Heart left ventricle (tissue), 16 donors: ENCODE measurements at regions of chr4 and their contacts with region 1.

Region 1: GRCh38 chr4:40056716-40057585 is at the start of gene N4BP2:
- DNase-seq: peak; percentile 86 to 93 (median 87)
- ATAC-seq: peak; percentile 60 to 86 (median 84)
- H3K4me3 ChIP-seq: peak within 1 kb of the TSS; percentile 73 to 100 (median 92)
- H3K27ac ChIP-seq: peak within 1 kb of the TSS; percentile 98 to 100 (median 100)
- H3K4me1 ChIP-seq: peaks cover 0 to 27% (median 12%) of the 10 kb centered on the region in 12 donors
- H3K27me3 ChIP-seq: no peaks in the 10 kb centered on the region
- CTCF ChIP-seq: peak; percentile 40 to 95 (median 76)
- POLR2A ChIP-seq: peak; percentile 56 to 91
- total RNA-seq, gene N4BP2: 3.5 to 6.8 (median 5.0) TPM

Region 2: GRCh38 chr4:39469429-39470077 is 587.4 kb before region 1 on chr4:
- intact Hi-C with region 1: loop called in 2 of 10 experiments (anchors 5 to 10 kb)
- DNase-seq: no peak
- ATAC-seq: peak; percentile 47 to 84 (median 76)
- H3K4me3 ChIP-seq: peak overlapping the region in 1 of 12 donors; percentile 28
- H3K27ac ChIP-seq: peak overlapping the region in 6 of 12 donors; percentile 11 to 82 (median 22)
- H3K4me1 ChIP-seq: peaks cover 0 to 10% (median 0%) of the 10 kb centered on the region in 12 donors
- H3K27me3 ChIP-seq: no peaks in the 10 kb centered on the region
- CTCF ChIP-seq: peak; percentile 63 to 89 (median 80)
- POLR2A ChIP-seq: no peak

Region 3: DNA sequence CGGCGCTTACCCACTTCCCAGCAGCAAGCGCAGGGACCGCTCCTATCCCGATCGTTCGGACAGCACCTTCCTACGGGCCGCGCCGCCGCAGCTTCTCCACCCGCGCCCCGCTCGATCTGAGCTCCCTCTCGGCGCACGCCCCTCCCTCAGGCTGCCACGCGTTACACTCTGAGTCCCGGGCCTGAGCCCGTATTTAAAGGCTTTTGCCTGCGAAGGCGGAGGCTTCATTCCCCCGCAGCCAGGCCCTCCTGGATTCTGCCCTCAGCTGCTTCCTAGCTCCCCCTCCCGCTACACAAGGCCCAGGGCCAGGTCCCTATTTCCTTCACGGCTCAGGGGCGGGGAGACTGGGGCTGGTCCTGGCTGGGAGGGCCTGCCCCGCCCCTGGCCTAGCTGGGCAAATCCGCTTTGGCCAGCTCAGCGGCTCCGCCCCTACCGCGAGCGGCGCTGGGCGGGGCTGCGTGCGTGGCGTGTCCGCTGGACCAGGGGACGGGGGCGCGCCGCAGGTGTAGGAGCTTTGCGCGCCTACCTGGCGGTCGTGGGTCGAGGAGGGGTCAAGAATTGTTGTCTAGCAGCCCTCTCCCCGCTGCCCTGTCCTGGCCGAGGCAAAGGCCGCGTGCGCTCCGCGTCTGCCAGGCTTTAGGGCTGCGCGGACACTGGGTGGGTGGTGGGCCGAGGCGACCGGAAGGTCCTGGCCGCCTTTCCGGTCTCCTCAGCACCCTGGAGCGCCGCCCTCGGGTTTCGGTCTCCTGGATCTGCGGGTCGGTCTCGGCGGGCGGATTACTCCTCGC is 529.5 kb before region 1 on chr4 and contains the start of gene UGDH:
- intact Hi-C with region 1: loop called in 1 of 10 experiments (anchors 10 kb)
- DNase-seq: peak; percentile 96 to 99 (median 98)
- ATAC-seq: peak; percentile 98 to 99 (median 99)
- H3K4me3 ChIP-seq: peak within 1 kb of the TSS; percentile 54 to 97 (median 76)
- H3K27ac ChIP-seq: peak within 1 kb of the TSS; percentile 87 to 97 (median 95)
- H3K4me1 ChIP-seq: peaks cover 0 to 30% (median 17%) of the 10 kb centered on the region in 12 donors
- H3K27me3 ChIP-seq: no peaks in the 10 kb centered on the region
- CTCF ChIP-seq: peak in 4 of 12 donors; percentile 4 to 41 (median 28)
- POLR2A ChIP-seq: peak; percentile 62 to 94
- total RNA-seq, gene UGDH: 7.3 to 28.6 (median 16.5) TPM

Region 4: GRCh38 chr4:40316782-40317635 is 260.1 kb after region 1 on chr4:
- intact Hi-C with region 1: loop called in 3 of 10 experiments (anchors 5 to 10 kb)
- DNase-seq: peak in 3 of 5 donors; percentile 27 to 41 (median 31)
- ATAC-seq: peak in 3 of 4 donors; percentile 73 to 91 (median 79)
- H3K4me3 ChIP-seq: peak overlapping the region in 9 of 12 donors; percentile 0 to 53 (median 38)
- H3K27ac ChIP-seq: peak overlapping the region in 7 of 12 donors; percentile 7 to 79 (median 37)
- H3K4me1 ChIP-seq: peaks cover 0 to 19% (median 7%) of the 10 kb centered on the region in 12 donors
- H3K27me3 ChIP-seq: no peaks in the 10 kb centered on the region
- CTCF ChIP-seq: peak; percentile 66 to 89 (median 80)
- POLR2A ChIP-seq: no peak